HepG2 (cell line): ENCODE measurements at regions of chr1 and their contacts with region 1.

Region 1: DNA sequence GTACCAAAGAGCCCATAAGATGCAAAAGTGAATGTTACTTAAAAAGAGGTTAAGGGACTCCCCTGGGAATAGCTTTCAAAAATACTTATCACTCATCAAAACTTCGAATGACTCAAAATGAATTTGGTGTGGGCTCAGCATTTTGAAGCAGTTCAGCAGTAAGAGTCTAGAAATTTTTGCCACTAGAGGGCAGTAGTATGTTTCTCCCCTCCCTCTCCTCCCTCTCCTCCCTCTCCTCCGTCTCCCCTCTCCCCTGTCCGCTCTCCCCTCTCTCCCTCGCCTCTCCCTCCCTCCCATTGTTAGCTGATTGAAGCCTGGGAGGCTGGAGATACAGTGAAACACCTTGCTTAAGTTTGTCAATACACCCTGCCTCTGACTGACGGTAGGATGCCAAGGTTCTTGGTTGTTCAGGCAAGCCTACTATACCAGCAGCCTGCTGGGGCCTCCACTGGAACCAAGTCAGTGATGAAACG is 70.8 kb upstream of the TENT5C start:
- DNase-seq: peak; percentile 31
- ATAC-seq: peak; percentile 89
- H3K4me3 ChIP-seq: no peak overlapping the region
- H3K27ac ChIP-seq: no peak overlapping the region
- H3K4me1 ChIP-seq: peaks cover 5% of the 10 kb centered on the region; the same call in 1 of the 2 replicates
- H3K27me3 ChIP-seq: no peaks in the 10 kb centered on the region
- CTCF ChIP-seq: peak; percentile 71
- EP300 ChIP-seq: no peak
- POLR2A ChIP-seq: no peak
- RAD21 ChIP-seq: no peak; the same call in 1 of the 2 replicates

Region 2: GRCh38 chr1:117735045-117735992 is 200.3 kb after region 1 on chr1:
- CTCF ChIA-PET with region 1: no interaction called
- POLR2A ChIA-PET with region 1: no interaction called
- in situ Hi-C with region 1: loop called (anchors 10 kb)
- intact Hi-C with region 1: no loop called
- DNase-seq: peak; percentile 10
- ATAC-seq: no peak
- H3K4me3 ChIP-seq: peak overlapping the region; percentile 23 to 64 (median 24); a peak in 5 of 6 replicates
- H3K27ac ChIP-seq: no peak overlapping the region
- H3K4me1 ChIP-seq: 0 out of 2 replicates have a peak, but pooled peaks cover 5% of the 10 kb centered on the region
- H3K27me3 ChIP-seq: no peaks in the 10 kb centered on the region
- CTCF ChIP-seq: no peak
- EP300 ChIP-seq: no peak
- POLR2A ChIP-seq: no peak
- RAD21 ChIP-seq: no peak